ENCODE measurements at regions of chr1 and their contacts with region 1.

Region 1: GRCh38 chr1:33295450-33296081 is 25.3 kb downstream of the A3GALT2 start:
- DNase-seq: peak; percentile 85 to 89
- ATAC-seq: peak; percentile 73 to 93 (median 84)
- H3K4me3 ChIP-seq: no peak overlapping the region
- H3K27ac ChIP-seq: peak overlapping the region in 4 of 10 donors; percentile 13 to 24 (median 15)
- H3K4me1 ChIP-seq: peaks cover 0 to 27% (median 17%) of the 10 kb centered on the region in 9 donors
- H3K27me3 ChIP-seq: no peaks in the 10 kb centered on the region
- CTCF ChIP-seq: peak; percentile 88 to 99 (median 96)

Region 2: DNA sequence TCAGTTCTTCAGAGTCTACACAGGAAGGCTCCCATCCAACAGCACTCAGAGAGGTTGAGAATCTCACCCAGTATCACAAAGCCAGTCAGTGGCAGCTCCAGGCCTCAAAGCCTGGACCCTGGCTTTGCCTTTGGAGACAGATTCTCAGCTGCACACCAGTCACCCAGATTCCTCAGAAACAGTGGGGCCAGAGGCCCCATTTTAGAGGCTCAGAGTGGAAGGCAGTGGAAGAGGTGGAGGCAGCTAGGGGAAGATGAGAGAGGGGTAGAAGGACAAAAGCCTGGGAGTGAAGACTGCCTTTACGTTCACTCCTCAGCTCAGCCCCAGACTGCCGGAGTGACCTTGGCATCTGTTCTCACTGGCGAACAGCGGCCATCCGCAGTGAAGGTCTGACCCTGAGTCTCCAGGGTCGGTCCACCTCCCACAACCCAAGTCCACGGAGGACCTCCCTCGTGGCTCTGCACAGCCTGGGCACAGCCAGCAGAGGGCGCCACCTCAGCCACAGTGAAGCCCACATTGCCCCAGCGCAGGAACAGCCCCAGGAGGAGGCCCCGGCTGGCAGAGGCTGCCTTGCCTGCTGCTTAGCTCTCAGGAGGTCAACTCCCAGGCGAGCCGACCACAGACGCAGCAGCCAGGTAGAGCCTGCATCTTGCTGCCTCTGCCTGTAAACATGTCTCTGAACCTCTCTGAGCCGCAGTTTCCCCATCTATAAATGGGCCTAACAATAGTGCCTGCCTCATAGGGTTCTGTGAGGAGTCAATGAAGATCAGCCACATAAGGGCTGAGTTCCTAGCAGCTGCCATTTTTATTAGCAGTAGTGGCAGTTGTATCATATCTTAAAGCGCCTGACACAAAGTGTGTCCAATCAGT is 419.0 kb before region 1 on chr1:
- intact Hi-C with region 1: no loop called
- DNase-seq: peak in 1 of 2 donors; percentile 63
- ATAC-seq: peak in 6 of 8 donors; percentile 43 to 75 (median 62)
- H3K4me3 ChIP-seq: no peak overlapping the region
- H3K27ac ChIP-seq: no peak overlapping the region
- H3K4me1 ChIP-seq: peaks cover 8 to 49% (median 30%) of the 10 kb centered on the region in 9 donors
- H3K27me3 ChIP-seq: peaks cover 0 to 32% (median 0%) of the 10 kb centered on the region in 7 donors
- CTCF ChIP-seq: peak; percentile 64 to 90 (median 84)

Region 3: GRCh38 chr1:33137800-33138199 is 157.8 kb before region 1 on chr1:
- intact Hi-C with region 1: loop called in 1 of 10 experiments (anchors 10 kb)
- DNase-seq: peak; percentile 30 to 58
- ATAC-seq: peak in 4 of 8 donors; percentile 36 to 61 (median 50)
- H3K4me3 ChIP-seq: no peak overlapping the region
- H3K27ac ChIP-seq: no peak overlapping the region
- H3K4me1 ChIP-seq: peaks cover 0 to 14% (median 2%) of the 10 kb centered on the region in 9 donors
- H3K27me3 ChIP-seq: no peaks in the 10 kb centered on the region
- CTCF ChIP-seq: peak in 8 of 9 donors; percentile 36 to 67 (median 58)

Region 4: DNA sequence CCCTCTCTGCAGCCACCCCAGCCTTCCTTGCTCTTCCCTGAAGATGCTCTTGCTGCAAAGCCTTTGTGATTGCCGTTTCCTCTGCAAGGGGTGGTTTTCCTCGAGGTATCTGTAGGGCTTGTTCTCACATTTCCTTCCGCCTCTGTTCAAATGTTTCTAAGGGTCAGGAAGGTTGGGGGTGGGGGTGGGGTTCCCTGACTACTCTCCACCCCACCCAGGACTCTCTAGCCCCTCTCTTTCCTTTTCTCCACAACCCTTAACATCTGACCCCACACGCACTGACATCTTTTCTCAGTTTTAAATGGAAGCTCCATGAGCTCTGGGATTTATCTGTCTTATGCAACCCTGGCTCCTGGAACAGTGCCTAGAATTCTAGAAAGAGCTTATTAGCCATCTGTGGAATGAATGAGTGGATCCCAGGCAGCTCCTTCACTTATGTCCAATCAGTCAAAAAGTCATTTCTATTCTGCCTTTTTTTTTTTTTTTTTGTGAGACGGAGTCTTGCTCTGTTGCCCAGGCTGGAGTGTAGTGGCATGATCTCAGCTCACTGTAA is 66.6 kb before region 1 on chr1:
- intact Hi-C with region 1: loop called in 4 of 10 experiments (anchors 5 to 10 kb)
- DNase-seq: peak in 1 of 2 donors; percentile 80
- ATAC-seq: peak; percentile 73 to 94 (median 90)
- H3K4me3 ChIP-seq: no peak overlapping the region
- H3K27ac ChIP-seq: peak overlapping the region in 5 of 10 donors; percentile 16 to 69 (median 24)
- H3K4me1 ChIP-seq: peaks cover 0 to 33% (median 6%) of the 10 kb centered on the region in 9 donors
- H3K27me3 ChIP-seq: no peaks in the 10 kb centered on the region
- CTCF ChIP-seq: no peak

Region 5: GRCh38 chr1:33455539-33456501 is 160.3 kb after region 1 on chr1:
- intact Hi-C with region 1: loop called in 1 of 10 experiments (anchors 5 kb)
- DNase-seq: peak in 1 of 2 donors; percentile 60
- ATAC-seq: peak; percentile 75 to 90 (median 84)
- H3K4me3 ChIP-seq: no peak overlapping the region
- H3K27ac ChIP-seq: peak overlapping the region in 7 of 10 donors; percentile 24 to 72 (median 54)
- H3K4me1 ChIP-seq: peaks cover 0 to 57% (median 25%) of the 10 kb centered on the region in 9 donors
- H3K27me3 ChIP-seq: no peaks in the 10 kb centered on the region
- CTCF ChIP-seq: peak; percentile 21 to 74 (median 65)

Region 6: GRCh38 chr1:33472349-33472980 is 176.9 kb after region 1 on chr1 and contains the start of gene ZSCAN20:
- intact Hi-C with region 1: loop called in 9 of 10 experiments (anchors 1 to 5 kb)
- DNase-seq: peak; percentile 98 to 99
- ATAC-seq: peak; percentile 89 to 97 (median 94)
- H3K4me3 ChIP-seq: peak within 1 kb of the TSS; percentile 19 to 77 (median 64)
- H3K27ac ChIP-seq: peak within 1 kb of the TSS; percentile 59 to 92 (median 84)
- H3K4me1 ChIP-seq: peaks cover 3 to 65% (median 41%) of the 10 kb centered on the region in 9 donors
- H3K27me3 ChIP-seq: no peaks in the 10 kb centered on the region
- CTCF ChIP-seq: no peak
- total RNA-seq, gene ZSCAN20: 3.4 to 9.3 (median 5.8) TPM

Region 7: GRCh38 chr1:33616773-33617172 is 321.2 kb after region 1 on chr1:
- intact Hi-C with region 1: loop called in 6 of 10 experiments (anchors 5 to 10 kb)
- DNase-seq: no peak
- ATAC-seq: peak in 1 of 8 donors; percentile 29
- H3K4me3 ChIP-seq: no peak overlapping the region
- H3K27ac ChIP-seq: no peak overlapping the region
- H3K4me1 ChIP-seq: peaks cover 0 to 6% (median 0%) of the 10 kb centered on the region in 9 donors
- H3K27me3 ChIP-seq: peaks cover 0 to 12% (median 4%) of the 10 kb centered on the region in 7 donors
- CTCF ChIP-seq: no peak

Measured in heart right ventricle (tissue), 16 donors.